Mucosa of descending colon (tissue), 3 donors: ENCODE measurements at regions of chr10 and their contacts with region 1.

Region 1: DNA sequence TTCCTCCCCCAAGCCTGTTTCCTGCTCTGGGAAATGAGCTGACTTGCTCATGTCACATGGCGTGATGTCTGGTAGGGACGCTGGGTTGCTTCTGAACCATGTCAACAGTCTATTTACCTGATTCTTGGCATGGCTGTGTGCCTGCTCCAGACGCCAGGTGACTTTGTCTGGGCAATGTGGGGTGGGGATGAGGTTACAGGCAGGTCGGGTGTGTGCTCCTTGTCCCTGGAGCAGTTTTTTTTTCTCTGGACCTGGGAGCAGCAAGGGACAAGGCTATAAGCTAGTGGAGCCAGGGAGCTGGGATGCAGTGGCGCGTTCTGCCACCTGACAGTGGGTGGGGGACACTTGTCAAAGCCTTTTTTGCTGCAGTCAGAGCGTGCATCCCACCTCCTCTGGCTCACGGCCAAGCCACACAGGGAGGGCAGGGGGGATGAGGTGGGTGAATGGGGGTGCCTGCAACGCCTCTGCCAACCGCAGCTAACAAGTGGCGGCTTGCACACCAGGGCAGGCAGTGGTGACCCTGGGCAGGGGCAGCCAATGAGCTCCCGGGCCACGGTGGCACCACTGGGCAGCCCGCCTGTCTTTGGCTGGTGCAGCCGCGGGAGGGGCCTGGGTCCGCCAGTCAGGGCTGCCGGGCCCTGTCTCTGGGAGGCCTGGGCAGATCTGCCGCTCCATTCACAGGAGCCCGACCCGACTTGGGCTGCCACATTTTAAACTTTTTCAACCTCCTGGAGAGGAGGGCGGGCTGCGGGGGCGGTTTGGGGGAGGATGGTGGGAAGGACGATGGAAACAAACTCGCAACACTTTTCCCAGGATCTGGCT is 22.9 kb downstream of the DNAJB12 start:
- DNase-seq: peak; percentile 82 to 96 (median 92)
- ATAC-seq: peak; percentile 79
- H3K4me3 ChIP-seq: no peak overlapping the region
- H3K4me1 ChIP-seq: peaks cover 41% of the 10 kb centered on the region
- CTCF ChIP-seq: no peak

Region 2: GRCh38 chr10:72126184-72126871 is 205.5 kb before region 1 on chr10:
- intact Hi-C with region 1: loop called (anchors 10 kb)
- DNase-seq: no peak
- ATAC-seq: no peak
- H3K4me3 ChIP-seq: no peak overlapping the region
- H3K4me1 ChIP-seq: no peaks in the 10 kb centered on the region
- CTCF ChIP-seq: no peak

Region 3: DNA sequence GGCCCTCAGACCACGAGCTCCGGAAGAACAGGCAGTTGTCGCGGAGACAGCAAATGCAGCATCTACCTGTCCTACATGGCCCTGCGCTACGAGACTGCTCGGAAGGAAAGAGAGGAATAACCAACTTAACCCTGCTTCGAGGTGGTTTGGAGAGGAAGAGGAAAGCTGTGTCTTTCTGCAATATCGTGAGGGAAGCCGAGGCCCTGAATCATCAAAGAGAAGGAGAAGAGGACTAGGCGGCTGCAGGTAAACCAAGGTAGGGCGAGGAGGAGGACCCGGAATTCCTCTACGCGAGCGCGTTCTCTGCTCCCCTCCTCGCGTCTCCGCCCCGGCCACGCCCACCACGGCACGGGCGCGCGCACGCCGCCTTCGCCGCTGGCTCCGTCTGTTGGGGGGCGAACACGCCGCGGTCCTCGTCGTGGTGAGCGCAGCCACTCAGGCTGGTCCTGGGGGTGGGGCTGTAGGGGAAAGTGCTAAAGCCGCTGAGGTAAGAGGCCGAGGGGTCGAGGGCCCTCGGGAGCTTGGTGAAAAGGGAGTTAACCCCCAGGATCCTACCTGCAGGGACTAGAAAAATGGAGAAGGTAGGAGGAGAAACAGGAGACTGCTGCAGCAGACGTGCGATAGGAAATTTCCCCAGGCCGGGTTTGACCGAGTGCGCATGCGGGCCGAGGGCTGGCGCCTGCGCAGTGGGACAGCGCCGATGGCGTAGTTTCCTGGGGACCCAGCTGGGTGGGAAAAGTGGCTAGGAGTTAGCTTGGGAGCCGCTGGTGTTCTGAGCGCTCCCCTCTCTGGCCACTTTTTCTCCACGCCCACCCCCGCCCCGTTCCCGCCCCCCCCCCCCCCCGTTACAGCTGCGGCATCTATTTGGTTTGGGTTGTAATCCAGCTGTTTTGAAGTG is 115.9 kb before region 1 on chr10 and contains the starts of genes ANAPC16 and ASCC1:
- intact Hi-C with region 1: loop called in 1 of 2 experiments (anchors 10 kb)
- DNase-seq: peak; percentile 92 to 96 (median 95)
- ATAC-seq: peak; percentile 99
- H3K4me3 ChIP-seq: peak within 1 kb of the TSS; percentile 36
- H3K4me1 ChIP-seq: peaks cover 27% of the 10 kb centered on the region
- CTCF ChIP-seq: no peak
- total RNA-seq, gene ANAPC16: 72.1 to 126 (median 83.5) TPM
- total RNA-seq, gene ASCC1: 18.0 to 23.6 (median 21.4) TPM

Region 4: DNA sequence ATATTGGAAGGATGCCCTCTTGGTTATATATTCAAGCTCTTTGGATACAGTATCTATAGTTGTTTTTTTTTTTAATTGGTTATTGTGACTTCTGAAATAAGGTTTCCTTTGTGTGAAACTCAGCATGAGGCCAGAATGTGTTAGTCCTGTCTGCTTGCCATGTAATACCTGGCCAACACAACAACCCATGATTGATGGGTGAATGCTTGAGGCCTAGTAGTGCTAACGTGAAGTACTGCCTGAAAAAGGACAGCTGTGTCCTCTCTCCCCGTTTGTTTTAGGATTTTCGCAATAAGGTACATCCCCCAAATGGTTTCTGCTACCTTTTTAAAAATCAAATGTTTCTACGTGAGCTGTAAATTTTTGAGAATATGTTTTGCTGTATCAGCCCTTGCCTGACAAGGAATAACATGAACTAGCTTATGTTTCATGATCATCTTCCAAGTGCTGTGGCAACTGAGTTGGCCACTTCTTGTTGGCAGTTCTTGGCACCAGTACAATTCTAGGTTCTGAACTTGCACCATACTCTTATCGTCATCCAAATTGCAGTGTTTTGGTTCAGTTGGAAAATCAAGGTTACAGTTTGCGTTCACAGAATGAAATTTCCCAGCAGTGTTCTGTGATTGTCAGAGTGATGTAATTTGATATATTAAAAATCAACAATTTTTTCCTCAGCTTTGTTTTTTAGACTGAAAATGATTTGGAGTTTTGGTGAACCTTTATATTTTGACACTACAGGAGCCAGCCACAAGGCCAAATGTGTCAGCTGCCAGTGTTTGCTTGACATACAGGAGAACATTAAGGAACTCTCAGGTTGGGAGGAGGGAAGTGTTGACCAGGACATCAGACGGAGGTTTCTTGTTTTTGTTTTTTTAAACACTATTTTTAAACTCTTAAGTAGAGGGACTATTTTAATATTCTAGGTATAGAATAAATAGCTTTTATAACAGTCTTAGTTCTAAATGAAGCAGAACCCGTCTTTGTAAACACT is 102.3 kb before region 1 on chr10:
- intact Hi-C with region 1: loop called in 1 of 2 experiments (anchors 10 kb)
- DNase-seq: no peak
- ATAC-seq: no peak
- H3K4me3 ChIP-seq: no peak overlapping the region
- H3K4me1 ChIP-seq: no peaks in the 10 kb centered on the region
- CTCF ChIP-seq: no peak

Region 5: GRCh38 chr10:72846225-72846624 is 514.4 kb after region 1 on chr10:
- intact Hi-C with region 1: no loop called
- DNase-seq: no peak
- ATAC-seq: no peak
- H3K4me3 ChIP-seq: no peak overlapping the region
- H3K4me1 ChIP-seq: no peaks in the 10 kb centered on the region
- CTCF ChIP-seq: no peak